Activated B cell treated with CpG ODN at 0.5 μM for 24 hours (primary cell): ENCODE measurements at regions of chr1 and their contacts with region 1.

Region 1: DNA sequence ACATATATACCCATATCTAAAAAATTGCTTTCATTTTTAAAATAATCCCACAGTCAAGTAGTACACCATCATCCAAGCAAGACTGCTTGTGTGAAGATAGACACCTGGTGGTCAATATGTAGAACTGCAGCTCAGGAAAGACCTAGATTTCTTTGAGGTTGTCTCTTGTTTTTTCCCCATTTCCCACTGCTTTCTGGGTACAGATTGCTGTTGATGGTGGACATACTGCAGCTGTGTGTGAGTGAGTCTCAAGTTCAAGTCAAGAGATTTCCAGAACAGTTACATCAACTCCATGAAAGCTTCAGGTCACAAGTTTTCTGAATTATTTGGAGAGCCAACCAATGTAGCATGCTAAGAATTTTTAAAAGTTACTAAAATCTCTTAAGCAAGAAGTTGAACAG is 306.4 kb downstream of the DUSP10 start:
- DNase-seq: no peak
- ATAC-seq: peak; percentile 27
- H3K4me3 Mint-ChIP-seq: no peak overlapping the region
- H3K27ac Mint-ChIP-seq: no peak overlapping the region
- H3K4me1 Mint-ChIP-seq: peaks cover 26% of the 10 kb centered on the region
- H3K27me3 Mint-ChIP-seq: peaks cover 4% of the 10 kb centered on the region
- CTCF ChIP-seq: peak; percentile 29

Region 2: DNA sequence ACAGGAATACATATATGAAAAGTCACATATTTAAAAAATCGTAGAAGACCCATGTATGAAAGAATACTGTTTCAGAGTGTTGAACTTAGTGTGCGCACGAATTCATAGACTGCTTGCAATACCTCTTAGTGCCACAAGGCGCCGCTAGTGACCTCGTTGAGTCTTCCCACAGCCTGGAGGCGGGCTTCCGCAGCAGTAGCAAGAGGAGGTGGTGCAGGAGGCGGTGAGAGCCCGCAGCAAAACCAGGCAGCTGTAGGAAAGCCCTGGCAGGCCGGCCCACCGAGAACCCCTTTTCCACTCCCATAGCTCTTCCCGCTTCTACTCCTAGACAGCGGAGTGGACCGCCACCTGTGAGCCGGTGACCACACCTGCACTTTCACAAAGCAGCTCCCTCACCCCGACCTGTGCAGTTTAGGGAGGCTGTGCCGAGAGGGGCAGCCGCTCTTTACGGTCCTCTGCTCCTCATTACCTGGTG is 625.3 kb before region 1 on chr1:
- CTCF ChIA-PET with region 1: interaction called, 17 read pairs
- POLR2A ChIA-PET with region 1: no interaction called
- intact Hi-C with region 1: loop called (anchors 1 kb)
- DNase-seq: peak; percentile 54
- ATAC-seq: peak; percentile 99
- H3K4me3 Mint-ChIP-seq: peak overlapping the region; percentile 55
- H3K27ac Mint-ChIP-seq: no peak overlapping the region
- H3K4me1 Mint-ChIP-seq: peaks cover 2% of the 10 kb centered on the region
- H3K27me3 Mint-ChIP-seq: peaks cover 4% of the 10 kb centered on the region
- CTCF ChIP-seq: peak; percentile 96

Region 3: DNA sequence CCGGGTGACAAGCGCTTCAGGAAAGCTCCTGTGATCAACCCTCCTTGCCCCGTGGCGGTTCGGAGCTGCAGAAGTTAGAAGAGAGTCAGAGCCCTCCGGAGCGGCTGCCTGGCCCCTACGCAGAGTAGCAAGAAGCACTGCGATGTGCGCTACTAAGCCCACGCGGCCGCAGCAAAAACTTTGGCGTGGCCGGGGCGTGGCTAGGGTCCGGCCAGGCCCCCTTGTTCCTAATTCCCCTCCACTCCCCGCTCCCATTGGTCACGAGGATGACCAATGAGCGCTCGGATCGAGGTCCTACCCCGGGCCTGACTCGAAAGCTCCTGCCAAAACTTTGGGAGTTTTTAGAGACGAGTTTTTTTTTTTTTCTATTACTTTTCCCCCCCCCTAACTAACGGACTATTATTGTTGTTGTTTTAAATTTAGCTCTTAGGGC is 556.4 kb before region 1 on chr1 and contains the start of gene HLX:
- CTCF ChIA-PET with region 1: interaction called, 52 read pairs
- POLR2A ChIA-PET with region 1: interaction called, 21 read pairs
- intact Hi-C with region 1: loop called (anchors 1 kb)
- DNase-seq: peak; percentile 75
- ATAC-seq: peak; percentile 80
- H3K4me3 Mint-ChIP-seq: peak within 1 kb of the TSS; percentile 94
- H3K27ac Mint-ChIP-seq: peak within 1 kb of the TSS; percentile 93
- H3K4me1 Mint-ChIP-seq: peaks cover 50% of the 10 kb centered on the region
- H3K27me3 Mint-ChIP-seq: peaks cover 2% of the 10 kb centered on the region
- CTCF ChIP-seq: no peak
- total RNA-seq, gene HLX: 3.2 and 4.6 TPM in 2 replicates

Region 4: DNA sequence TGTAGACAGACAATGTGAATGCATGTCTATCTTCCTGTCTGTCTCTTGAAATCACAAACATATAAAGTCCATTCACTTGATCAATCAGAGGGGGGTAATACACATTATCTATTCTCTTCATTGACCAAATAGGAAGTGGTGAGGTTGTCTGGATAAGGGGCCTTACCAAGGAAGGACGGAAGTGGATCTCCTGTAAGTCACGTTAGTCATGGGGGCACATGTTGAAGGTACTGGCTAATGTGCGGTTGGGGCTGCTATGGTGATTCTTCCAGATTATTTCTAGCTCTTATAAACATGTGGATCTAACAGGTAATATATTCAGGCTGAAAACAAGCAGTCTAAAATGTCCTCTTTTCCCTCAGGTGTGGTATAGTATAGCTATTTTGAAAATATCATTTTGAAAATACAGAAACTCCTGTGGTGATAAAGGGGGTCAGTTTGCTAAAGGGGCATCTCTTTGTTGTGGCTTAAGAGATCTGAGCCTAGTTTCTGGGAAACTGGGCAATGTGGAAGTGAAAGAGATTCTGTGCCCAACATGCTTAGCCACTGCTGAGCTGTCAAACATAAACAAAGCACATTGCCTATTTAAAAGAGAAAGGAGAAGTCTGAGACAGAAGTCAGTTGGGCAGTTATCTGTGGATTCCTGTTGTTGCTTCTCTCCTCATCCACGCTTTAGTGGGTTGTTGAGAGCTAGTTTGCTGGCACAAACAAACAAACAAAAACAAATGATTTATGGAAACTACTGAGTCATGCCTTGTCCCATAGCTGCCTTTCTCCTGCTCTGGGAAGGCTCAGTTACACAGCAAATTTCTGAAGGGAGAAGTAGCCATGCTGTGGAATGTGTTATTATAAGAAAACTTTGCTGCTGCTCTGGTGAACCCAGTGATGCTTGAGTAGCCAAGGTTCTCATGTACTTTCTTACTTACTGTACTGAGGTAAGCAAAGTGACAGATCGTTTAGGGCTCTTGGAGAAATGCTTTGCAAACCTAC is 389.4 kb before region 1 on chr1:
- CTCF ChIA-PET with region 1: no interaction called
- POLR2A ChIA-PET with region 1: no interaction called
- intact Hi-C with region 1: loop called (anchors 1 kb)
- DNase-seq: no peak
- ATAC-seq: peak; percentile 90
- H3K4me3 Mint-ChIP-seq: peak overlapping the region; percentile 77
- H3K27ac Mint-ChIP-seq: peak overlapping the region; percentile 96
- H3K4me1 Mint-ChIP-seq: peaks cover 58% of the 10 kb centered on the region
- H3K27me3 Mint-ChIP-seq: no peaks in the 10 kb centered on the region
- CTCF ChIP-seq: no peak

Region 5: DNA sequence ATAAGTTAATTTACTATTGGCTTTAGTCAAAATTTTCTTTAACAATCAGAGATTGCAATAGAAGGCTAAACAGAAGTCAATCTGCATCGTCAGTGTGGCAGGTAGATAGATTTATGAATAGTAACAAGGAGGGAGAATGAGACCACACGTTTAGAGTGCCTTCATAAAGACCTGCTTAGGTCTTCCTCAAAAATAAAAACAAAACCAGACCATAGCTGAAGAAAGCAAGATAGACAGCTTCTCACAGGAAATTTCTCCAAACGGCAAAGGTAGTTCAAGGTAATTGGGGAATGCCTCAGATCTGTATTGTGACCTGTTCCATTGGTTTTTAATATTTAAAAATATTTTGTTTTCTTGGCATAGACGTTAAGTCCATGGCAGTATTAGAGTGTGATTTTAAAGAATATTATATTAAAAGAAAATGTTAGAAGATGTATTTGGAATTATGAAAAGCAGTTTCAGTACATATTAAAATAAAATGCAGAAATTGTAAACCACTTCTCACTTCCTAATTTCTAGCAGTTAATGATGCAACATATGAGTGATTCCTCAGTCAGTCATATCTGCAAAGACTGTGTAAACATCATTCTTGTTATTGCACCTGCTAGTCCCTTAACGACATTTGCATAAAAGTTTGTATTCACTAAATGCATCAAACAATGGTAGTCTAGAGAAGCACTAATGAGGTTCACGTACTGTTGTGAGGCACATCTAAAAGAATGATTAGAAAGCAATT is 278.3 kb before region 1 on chr1:
- CTCF ChIA-PET with region 1: no interaction called
- POLR2A ChIA-PET with region 1: no interaction called
- intact Hi-C with region 1: loop called (anchors 5 kb)
- DNase-seq: no peak
- ATAC-seq: peak; percentile 93
- H3K4me3 Mint-ChIP-seq: no peak overlapping the region
- H3K27ac Mint-ChIP-seq: peak overlapping the region; percentile 74
- H3K4me1 Mint-ChIP-seq: peaks cover 29% of the 10 kb centered on the region
- H3K27me3 Mint-ChIP-seq: peaks cover under 1% of the 10 kb centered on the region
- CTCF ChIP-seq: no peak

Region 6: DNA sequence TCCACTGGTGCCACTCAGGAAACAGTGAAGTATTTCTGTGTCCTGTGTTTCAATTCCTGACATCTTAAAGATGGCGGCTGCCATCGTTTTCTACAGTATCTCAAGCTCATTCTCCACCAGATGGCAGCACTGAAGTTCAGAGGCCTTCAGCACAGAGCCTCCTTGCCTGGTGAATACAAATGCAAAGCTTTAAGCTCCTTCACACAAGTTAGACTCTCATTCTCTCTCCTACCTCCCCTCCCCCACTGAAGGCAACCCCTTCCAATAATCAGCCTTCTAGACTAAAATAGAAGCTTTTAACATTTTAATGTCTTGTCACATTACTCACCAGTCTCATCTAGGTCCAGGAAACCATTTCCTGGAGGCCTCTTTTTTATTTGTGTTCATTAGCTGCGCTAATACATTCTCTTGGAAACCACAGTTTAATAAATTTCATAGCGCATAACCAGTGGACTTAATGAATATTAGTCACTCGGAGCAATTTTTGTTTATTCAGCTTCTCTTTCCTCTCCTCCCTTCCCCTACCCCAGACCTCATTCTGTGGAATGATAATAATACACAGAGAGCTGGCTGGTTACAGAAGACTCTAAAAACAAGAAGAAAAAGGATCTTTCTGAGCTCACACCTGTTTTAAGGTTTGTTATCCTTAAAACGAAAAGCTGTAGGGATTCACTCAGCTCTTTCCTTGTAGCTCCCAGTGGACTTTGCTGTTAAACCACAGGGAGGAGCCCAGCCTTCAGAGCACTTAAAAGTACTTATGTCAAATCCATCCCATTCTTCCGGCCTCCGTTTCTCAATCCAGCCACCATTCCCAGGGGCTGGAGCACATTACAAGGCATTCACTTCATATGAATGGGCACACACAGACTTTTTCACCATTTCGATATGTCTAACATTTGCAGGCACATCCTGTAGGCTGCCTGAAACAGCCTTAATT is 171.4 kb before region 1 on chr1:
- CTCF ChIA-PET with region 1: interaction called, 21 read pairs
- POLR2A ChIA-PET with region 1: no interaction called
- intact Hi-C with region 1: loop called (anchors 1 kb)
- DNase-seq: no peak
- ATAC-seq: peak; percentile 69
- H3K4me3 Mint-ChIP-seq: no peak overlapping the region
- H3K27ac Mint-ChIP-seq: no peak overlapping the region
- H3K4me1 Mint-ChIP-seq: no peaks in the 10 kb centered on the region
- H3K27me3 Mint-ChIP-seq: peaks cover 19% of the 10 kb centered on the region
- CTCF ChIP-seq: no peak